Activated CD4-positive, alpha-beta memory T cell treated with anti-CD3 and anti-CD28 coated beads for 36 hours (primary cell): ENCODE measurements at regions of chr13 and their contacts with region 1.

Region 1: GRCh38 chr13:27362064-27362883 is 62.1 kb upstream of the GTF3A start:
- DNase-seq: peak; percentile 85
- H3K4me3 Mint-ChIP-seq: no peak overlapping the region
- H3K27ac Mint-ChIP-seq: no peak overlapping the region
- H3K4me1 Mint-ChIP-seq: no peaks in the 10 kb centered on the region
- H3K27me3 Mint-ChIP-seq: peaks cover 22% of the 10 kb centered on the region

Region 2: GRCh38 chr13:26743971-26744370 is 618.3 kb before region 1 on chr13:
- CTCF ChIA-PET with region 1: no interaction called
- POLR2A ChIA-PET with region 1: no interaction called
- intact Hi-C with region 1: no loop called
- DNase-seq: no peak
- H3K4me3 Mint-ChIP-seq: no peak overlapping the region
- H3K27ac Mint-ChIP-seq: no peak overlapping the region
- H3K4me1 Mint-ChIP-seq: no peaks in the 10 kb centered on the region
- H3K27me3 Mint-ChIP-seq: peaks cover 13% of the 10 kb centered on the region

Region 3: GRCh38 chr13:26946684-26947343 is 415.5 kb before region 1 on chr13:
- CTCF ChIA-PET with region 1: interaction called, 40 read pairs
- POLR2A ChIA-PET with region 1: no interaction called
- intact Hi-C with region 1: loop called (anchors 1 kb)
- DNase-seq: no peak
- H3K4me3 Mint-ChIP-seq: no peak overlapping the region
- H3K27ac Mint-ChIP-seq: no peak overlapping the region
- H3K4me1 Mint-ChIP-seq: no peaks in the 10 kb centered on the region
- H3K27me3 Mint-ChIP-seq: peaks cover 8% of the 10 kb centered on the region

Region 4: GRCh38 chr13:27339299-27339698 is 23.0 kb before region 1 on chr13:
- CTCF ChIA-PET with region 1: interaction called, 13 read pairs
- POLR2A ChIA-PET with region 1: interaction called, 3 read pairs
- intact Hi-C with region 1: no loop called
- DNase-seq: peak; percentile 58
- H3K4me3 Mint-ChIP-seq: no peak overlapping the region
- H3K27ac Mint-ChIP-seq: no peak overlapping the region
- H3K4me1 Mint-ChIP-seq: no peaks in the 10 kb centered on the region
- H3K27me3 Mint-ChIP-seq: peaks cover 8% of the 10 kb centered on the region

Region 5: DNA sequence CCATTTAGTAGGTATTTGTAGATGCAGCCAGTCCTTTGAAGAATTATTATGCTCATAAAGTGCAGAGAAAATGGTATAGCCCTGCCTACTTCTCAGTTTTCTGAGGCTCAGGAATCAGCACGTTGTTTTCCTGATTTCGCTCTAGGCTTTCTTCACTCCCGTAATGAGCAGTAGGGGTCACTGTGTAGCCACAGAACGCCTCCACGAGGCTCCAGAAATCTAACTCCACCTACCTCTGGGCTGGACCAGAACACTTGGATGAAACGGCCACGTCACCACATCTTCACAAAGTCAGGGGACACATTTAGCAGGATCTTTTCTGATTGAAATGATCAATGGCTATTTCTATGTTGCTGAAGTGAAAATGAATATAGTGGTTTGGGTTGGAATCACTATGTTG is 12.4 kb after region 1 on chr13:
- CTCF ChIA-PET with region 1: interaction called, 63 read pairs
- POLR2A ChIA-PET with region 1: no interaction called
- intact Hi-C with region 1: no loop called
- DNase-seq: peak; percentile 70
- H3K4me3 Mint-ChIP-seq: no peak overlapping the region
- H3K27ac Mint-ChIP-seq: no peak overlapping the region
- H3K4me1 Mint-ChIP-seq: peaks cover 5% of the 10 kb centered on the region
- H3K27me3 Mint-ChIP-seq: peaks cover 20% of the 10 kb centered on the region

Region 6: GRCh38 chr13:27489456-27489855 is 127.2 kb after region 1 on chr13:
- CTCF ChIA-PET with region 1: no interaction called
- POLR2A ChIA-PET with region 1: no interaction called
- intact Hi-C with region 1: no loop called
- DNase-seq: no peak
- H3K4me3 Mint-ChIP-seq: no peak overlapping the region
- H3K27ac Mint-ChIP-seq: no peak overlapping the region
- H3K4me1 Mint-ChIP-seq: no peaks in the 10 kb centered on the region
- H3K27me3 Mint-ChIP-seq: no peaks in the 10 kb centered on the region